ENCODE measurements at regions of chr3 and their contacts with region 1.

Region 1: GRCh38 chr3:12175844-12176453 is 17.2 kb upstream of the TIMP4 start:
- DNase-seq: peak; percentile 79
- H3K4me3 ChIP-seq: no peak overlapping the region
- H3K27ac ChIP-seq: no peak overlapping the region
- H3K4me1 ChIP-seq: peaks cover 20% of the 10 kb centered on the region
- H3K27me3 ChIP-seq: no peaks in the 10 kb centered on the region
- CTCF ChIP-seq: peak; percentile 58 to 84 (median 66)
- POLR2A ChIP-seq: no peak

Region 2: GRCh38 chr3:12135029-12135657 is 40.8 kb before region 1 on chr3:
- intact Hi-C with region 1: loop called (anchors 5 kb)
- DNase-seq: peak; percentile 89
- H3K4me3 ChIP-seq: no peak overlapping the region
- H3K27ac ChIP-seq: no peak overlapping the region
- H3K4me1 ChIP-seq: peaks cover 4% of the 10 kb centered on the region
- H3K27me3 ChIP-seq: no peaks in the 10 kb centered on the region
- CTCF ChIP-seq: peak; percentile 76 to 82 (median 78)
- POLR2A ChIP-seq: no peak

Region 3: DNA sequence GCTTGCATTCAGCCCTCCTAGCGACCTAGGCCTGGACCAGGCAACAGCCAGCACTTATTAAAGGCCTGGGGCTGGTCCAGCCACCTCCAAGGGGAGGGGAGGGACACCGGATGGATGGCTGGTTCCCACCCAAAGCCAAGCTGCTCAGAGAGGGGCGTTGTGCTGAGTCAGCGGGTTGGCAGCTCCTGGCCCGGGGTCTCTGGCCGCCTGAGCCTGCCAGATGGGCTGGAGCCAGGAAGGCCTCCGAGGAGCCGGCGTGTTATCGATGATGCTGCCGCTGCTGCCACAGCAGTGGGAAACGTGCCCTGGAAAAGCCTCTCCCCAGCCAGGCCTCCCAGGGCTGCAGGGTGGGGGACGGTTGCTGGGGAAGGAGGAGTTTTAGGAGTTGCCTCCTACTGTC is 265.0 kb after region 1 on chr3:
- intact Hi-C with region 1: no loop called
- DNase-seq: peak; percentile 52
- H3K4me3 ChIP-seq: no peak overlapping the region
- H3K27ac ChIP-seq: no peak overlapping the region
- H3K4me1 ChIP-seq: peaks cover 9% of the 10 kb centered on the region
- H3K27me3 ChIP-seq: no peaks in the 10 kb centered on the region
- CTCF ChIP-seq: no peak
- POLR2A ChIP-seq: no peak

Region 4: GRCh38 chr3:12479919-12480425 is 304.0 kb after region 1 on chr3:
- intact Hi-C with region 1: loop called (anchors 5 kb)
- DNase-seq: no peak
- H3K4me3 ChIP-seq: no peak overlapping the region
- H3K27ac ChIP-seq: no peak overlapping the region
- H3K4me1 ChIP-seq: peaks cover 16% of the 10 kb centered on the region
- H3K27me3 ChIP-seq: no peaks in the 10 kb centered on the region
- CTCF ChIP-seq: peak; percentile 69 to 83 (median 71)
- POLR2A ChIP-seq: no peak